PC-9 (cell line): ENCODE measurements at regions of chr1 and their contacts with region 1.

Region 1: GRCh38 chr1:235190431-235190830 is 29.4 kb upstream of the RBM34 start:
- DNase-seq: no peak
- H3K4me3 ChIP-seq: no peak overlapping the region
- H3K27ac ChIP-seq: no peak overlapping the region
- H3K4me1 ChIP-seq: no peaks in the 10 kb centered on the region
- H3K27me3 ChIP-seq: no peaks in the 10 kb centered on the region
- CTCF ChIP-seq: no peak

Region 2: GRCh38 chr1:235128456-235129328 is 61.7 kb before region 1 on chr1 and contains the start of gene TOMM20:
- CTCF ChIA-PET with region 1: no interaction called
- POLR2A ChIA-PET with region 1: interaction called, 10 read pairs
- intact Hi-C with region 1: no loop called
- DNase-seq: peak; percentile 93 to 98
- H3K4me3 ChIP-seq: peak within 1 kb of the TSS; percentile 90
- H3K27ac ChIP-seq: peak within 1 kb of the TSS; percentile 74
- H3K4me1 ChIP-seq: peaks cover 43% of the 10 kb centered on the region
- H3K27me3 ChIP-seq: no peaks in the 10 kb centered on the region
- CTCF ChIP-seq: no peak
- total RNA-seq, gene TOMM20: 165 and 187 TPM in 2 replicates

Region 3: GRCh38 chr1:235221653-235222375 is 31.4 kb after region 1 on chr1:
- CTCF ChIA-PET with region 1: no interaction called
- POLR2A ChIA-PET with region 1: interaction called, 10 read pairs
- intact Hi-C with region 1: no loop called
- DNase-seq: no peak
- H3K4me3 ChIP-seq: no peak overlapping the region
- H3K27ac ChIP-seq: no peak overlapping the region
- H3K4me1 ChIP-seq: no peaks in the 10 kb centered on the region
- H3K27me3 ChIP-seq: no peaks in the 10 kb centered on the region
- CTCF ChIP-seq: no peak